Left colon (tissue), 2 donors: ENCODE measurements at regions of chr16 and their contacts with region 1.

Region 1: DNA sequence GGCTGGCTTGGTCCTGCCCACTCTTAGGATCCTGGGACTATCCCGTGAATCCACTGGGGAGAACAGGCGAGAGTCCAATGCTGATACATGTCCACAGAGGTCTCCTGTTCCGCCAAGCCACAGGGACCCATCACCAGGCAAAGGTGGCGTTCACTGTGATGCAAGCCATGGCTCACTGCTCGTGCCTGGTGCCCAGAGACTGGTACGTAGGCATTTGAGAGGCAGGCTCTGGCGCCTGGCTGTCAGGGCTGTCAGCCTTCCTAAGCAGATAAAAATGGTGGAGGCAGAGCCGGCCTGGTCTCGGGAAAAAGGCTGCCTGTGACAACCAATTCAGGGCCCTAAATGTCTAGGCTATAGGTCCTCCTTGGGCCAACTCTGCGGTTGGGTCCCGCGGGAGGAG is 2329.0 kb downstream of the TP53TG3F start:
- DNase-seq: no peak
- ATAC-seq: no peak

Region 2: DNA sequence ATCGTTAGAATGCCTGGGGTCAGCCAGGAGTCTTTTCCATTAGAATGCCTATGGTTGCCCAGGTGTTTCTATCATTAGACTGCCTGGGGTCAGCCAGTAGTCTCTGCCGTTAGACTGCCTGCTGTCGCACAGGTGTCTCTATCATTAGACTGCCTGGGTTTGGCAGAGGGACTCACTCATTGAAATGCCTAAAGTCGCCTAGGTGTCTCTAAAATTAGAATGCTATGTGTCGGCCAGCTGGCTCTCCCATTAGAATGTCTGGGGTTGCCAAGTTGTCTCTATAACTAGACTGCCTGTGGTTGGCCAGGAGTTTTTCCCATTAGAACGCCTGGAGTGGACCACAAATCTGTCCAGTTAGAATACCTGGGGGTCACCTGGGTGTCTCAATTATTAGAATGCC is 62.4 kb before region 1 on chr16:
- intact Hi-C with region 1: loop called in 1 of 2 experiments (anchors 10 kb)
- DNase-seq: no peak
- ATAC-seq: no peak